GM23248 (cell line): ENCODE measurements at regions of chr11 and their contacts with region 1.

Region 1: DNA sequence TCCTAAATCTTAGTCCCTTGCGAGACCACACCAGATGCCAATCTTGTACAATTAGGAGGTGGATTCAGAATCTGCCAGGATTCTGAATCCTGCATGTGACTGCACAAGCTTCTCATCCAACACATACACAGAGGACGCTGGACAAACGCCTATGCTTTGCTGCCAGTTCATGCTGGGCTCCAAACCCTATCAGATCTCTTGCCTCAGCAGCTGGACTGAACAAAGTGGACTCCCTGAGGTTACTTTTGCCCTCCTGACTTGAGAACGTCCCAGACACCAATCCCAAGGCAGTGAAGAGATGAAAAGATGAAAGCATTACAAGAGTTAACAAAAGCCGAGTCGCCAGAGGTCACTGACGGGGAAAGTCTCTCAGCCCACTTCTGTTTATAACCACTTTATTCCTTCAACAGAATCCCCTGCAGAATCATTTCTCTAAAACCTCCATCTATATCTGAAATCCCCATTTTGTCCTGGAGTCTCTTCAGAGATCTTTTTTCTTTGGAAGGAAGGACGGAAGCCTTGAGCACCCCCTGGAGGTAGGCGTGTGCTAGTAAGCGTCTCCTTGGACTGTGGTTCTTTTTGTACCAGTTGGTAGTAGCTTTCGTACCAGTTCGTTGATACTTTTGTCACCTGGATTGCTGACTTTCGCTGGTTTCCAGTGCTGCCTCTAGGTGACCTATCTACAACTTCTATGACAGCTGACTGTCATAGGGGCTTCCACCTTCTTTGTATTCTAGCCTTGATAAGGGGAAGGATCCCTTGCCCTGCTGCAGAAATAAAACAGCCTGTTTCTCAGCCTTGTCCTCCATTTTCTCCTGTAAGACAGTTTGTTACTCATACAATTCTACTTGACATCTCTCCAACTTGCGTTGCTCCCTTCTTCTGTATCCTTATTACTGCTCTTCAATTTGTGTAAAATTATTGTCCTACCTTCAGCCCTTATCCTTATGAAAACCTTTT is 26.1 kb upstream of the EED start:
- DNase-seq: peak; percentile 89
- H3K4me3 ChIP-seq: peak overlapping the region; percentile 63
- H3K27ac ChIP-seq: no peak overlapping the region
- H3K4me1 ChIP-seq: no peaks in the 10 kb centered on the region; the same call in 1 of the 2 replicates
- H3K27me3 ChIP-seq: no peaks in the 10 kb centered on the region

Region 2: DNA sequence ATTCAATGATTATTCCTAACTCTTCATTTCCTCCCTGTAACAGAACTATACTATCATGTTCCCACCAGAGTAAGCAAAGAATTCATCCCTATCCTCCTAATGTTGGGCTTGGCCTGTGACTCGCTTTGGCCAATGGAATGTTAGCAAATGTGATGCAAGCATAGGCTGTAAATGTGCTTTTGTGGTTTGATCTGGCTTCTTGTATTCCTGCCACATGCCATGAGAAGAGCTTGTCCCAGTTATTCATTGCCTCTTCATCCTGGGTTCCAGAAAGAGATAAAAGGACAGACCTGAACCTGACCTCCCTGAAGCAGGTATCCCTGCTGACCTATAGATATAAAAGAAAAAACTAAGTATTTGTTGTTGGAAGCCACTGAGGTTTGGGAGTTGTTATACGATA is 458.5 kb before region 1 on chr11:
- in situ Hi-C with region 1: no loop called
- DNase-seq: peak; percentile 88
- H3K4me3 ChIP-seq: no peak overlapping the region
- H3K27ac ChIP-seq: 0 out of 2 replicates have a peak overlapping the region, but pooled peaks have one; percentile 18
- H3K4me1 ChIP-seq: peaks cover 12% of the 10 kb centered on the region
- H3K27me3 ChIP-seq: no peaks in the 10 kb centered on the region

Region 3: DNA sequence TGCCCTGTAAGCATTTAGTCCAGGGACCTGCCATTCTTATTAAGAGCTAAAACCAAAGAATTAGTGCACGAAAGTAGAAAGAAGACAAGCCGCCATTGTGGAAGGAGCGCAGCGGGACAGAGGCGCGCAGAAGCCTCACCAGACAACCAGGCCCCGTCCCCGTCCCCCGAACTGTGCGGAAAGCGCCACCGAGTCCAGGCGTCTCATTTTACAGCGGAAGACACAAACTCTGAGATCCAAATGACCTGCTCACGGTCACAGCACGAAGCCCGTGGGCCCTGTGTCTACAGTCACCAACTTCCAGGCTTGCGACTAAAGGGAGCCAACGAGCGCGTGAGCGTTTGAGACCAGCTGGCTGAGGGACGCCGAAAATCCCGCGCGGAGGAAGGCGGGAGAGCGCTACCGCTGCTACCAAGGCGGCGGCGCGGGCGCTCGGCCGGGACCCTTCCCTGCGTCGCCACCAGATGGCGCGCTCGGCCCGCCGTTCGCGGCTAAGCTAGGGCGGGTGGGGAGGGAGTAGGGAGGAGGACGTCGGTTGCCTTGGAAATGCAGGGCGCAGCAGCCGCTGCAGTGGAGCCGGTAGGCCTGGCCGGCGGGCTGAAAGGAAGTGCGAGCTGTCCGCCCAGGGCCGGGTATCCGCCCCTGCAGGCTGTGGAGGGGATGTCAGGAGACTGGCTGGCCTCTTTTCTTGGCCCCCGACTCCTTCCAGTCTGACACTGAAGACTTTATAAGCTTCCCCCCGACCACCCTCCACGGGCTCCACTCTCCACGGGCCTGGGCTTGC is 363.7 kb before region 1 on chr11:
- in situ Hi-C with region 1: loop called (anchors 25 kb)
- DNase-seq: peak; percentile 97
- H3K4me3 ChIP-seq: peak overlapping the region; percentile 77
- H3K27ac ChIP-seq: peak overlapping the region; percentile 68
- H3K4me1 ChIP-seq: peaks cover 12% of the 10 kb centered on the region
- H3K27me3 ChIP-seq: no peaks in the 10 kb centered on the region

Region 4: GRCh38 chr11:86035164-86035563 is 183.2 kb before region 1 on chr11:
- in situ Hi-C with region 1: loop called (anchors 10 kb)
- DNase-seq: no peak
- H3K4me3 ChIP-seq: no peak overlapping the region
- H3K27ac ChIP-seq: no peak overlapping the region; the same call in 1 of the 2 replicates
- H3K4me1 ChIP-seq: peaks cover 28% of the 10 kb centered on the region
- H3K27me3 ChIP-seq: no peaks in the 10 kb centered on the region